Activated CD8-positive, alpha-beta T cell treated with anti-CD3 and anti-CD28 coated beads for 36 hours (primary cell): ENCODE measurements at regions of chr12 and their contacts with region 1.

Region 1: DNA sequence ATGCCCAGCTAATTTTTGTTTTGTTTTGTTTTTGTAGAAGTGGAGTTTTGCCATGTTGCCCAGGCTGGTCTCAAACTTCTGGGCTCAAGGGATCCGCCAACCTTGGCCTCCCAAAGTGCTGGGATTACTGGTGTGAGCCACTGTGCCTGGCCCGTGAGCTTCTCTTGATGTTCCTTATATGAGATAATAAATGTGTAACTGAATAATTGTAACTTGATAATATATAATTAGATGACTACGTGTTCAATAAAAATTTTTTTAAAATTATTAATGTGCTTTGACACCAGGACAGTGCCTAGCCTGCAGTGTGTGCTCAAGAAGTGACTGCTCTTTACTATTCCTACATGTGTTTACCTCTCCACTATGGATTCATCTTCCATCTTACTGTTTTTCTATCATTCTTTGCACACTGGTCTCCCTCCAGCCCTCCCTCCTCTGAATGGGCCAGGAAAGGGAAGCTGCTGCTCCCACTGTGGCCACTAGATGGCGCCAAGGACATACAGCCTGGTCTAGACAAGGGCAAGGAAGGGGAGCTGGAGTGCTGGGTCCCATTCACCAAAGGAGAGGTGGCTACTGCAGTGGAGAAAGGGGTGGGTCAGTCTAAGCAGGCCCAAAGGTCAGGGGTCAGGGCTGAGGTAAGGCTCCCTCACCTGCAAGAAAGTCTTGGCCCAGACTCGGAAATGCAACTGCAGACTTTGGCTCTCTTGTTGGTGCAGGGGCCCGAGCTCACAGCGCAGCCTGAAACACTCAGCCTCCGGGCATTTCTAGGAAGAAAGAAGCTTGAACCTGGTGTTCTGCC is 14.7 kb upstream of the ZNF385A start:
- DNase-seq: peak; percentile 93
- ATAC-seq: peak; percentile 97
- H3K4me3 Mint-ChIP-seq: no peak overlapping the region
- H3K27ac Mint-ChIP-seq: no peak overlapping the region
- H3K4me1 Mint-ChIP-seq: peaks cover 5% of the 10 kb centered on the region
- H3K27me3 Mint-ChIP-seq: no peaks in the 10 kb centered on the region
- CTCF ChIP-seq: peak; percentile 92

Region 2: GRCh38 chr12:54359033-54359761 is 40.0 kb before region 1 on chr12:
- CTCF ChIA-PET with region 1: interaction called, 14 read pairs
- POLR2A ChIA-PET with region 1: no interaction called
- intact Hi-C with region 1: no loop called
- DNase-seq: peak; percentile 97
- ATAC-seq: peak; percentile 93
- H3K4me3 Mint-ChIP-seq: no peak overlapping the region
- H3K27ac Mint-ChIP-seq: no peak overlapping the region
- H3K4me1 Mint-ChIP-seq: peaks cover 17% of the 10 kb centered on the region
- H3K27me3 Mint-ChIP-seq: no peaks in the 10 kb centered on the region
- CTCF ChIP-seq: no peak

Region 3: DNA sequence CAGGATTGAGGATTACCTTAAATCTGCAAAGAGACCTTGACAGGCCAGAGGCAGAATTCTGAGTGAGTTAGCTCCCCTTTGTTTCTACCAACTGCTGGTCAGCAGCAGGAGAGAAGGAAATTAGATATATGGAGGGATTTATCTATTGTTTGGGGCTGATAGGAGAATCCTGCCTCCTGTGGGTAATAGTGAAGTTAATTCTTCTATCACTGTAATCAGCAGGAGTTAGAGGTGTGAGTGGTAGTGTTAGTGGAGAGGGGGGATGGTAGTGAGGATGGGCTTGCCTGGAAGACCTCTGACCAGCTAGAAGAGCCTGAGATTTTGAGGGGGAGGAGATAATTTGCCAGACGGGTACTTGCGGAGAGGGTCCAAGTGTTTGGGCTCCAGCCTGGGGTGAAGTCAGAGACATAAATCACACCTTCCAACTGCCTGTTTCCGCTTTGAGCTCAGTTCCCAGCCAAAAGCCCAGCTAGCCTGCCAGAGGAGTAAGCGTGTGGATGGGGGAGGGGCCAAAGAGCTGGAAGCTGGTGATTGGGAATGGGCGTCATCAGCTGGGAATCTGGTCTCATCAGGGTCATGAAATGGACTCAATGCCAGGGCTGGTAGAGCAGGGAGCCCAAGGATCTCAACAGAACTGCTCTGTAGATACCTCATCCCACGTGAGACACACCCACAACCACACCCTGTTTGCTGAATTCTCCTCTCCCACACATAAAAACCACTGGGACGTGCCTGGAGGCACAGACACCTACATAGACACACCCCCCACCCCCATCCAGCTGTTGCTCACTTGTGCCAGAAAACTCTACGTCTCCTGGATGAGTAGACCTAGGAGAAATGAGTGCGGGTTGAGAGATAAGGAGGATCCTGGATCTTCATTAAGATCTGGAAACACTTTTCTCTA is 33.0 kb after region 1 on chr12:
- CTCF ChIA-PET with region 1: interaction called, 479 read pairs
- POLR2A ChIA-PET with region 1: interaction called, 10 read pairs
- intact Hi-C with region 1: no loop called
- DNase-seq: peak; percentile 80
- ATAC-seq: peak; percentile 72
- H3K4me3 Mint-ChIP-seq: peak overlapping the region; percentile 37
- H3K27ac Mint-ChIP-seq: peak overlapping the region; percentile 60
- H3K4me1 Mint-ChIP-seq: peaks cover 29% of the 10 kb centered on the region
- H3K27me3 Mint-ChIP-seq: no peaks in the 10 kb centered on the region
- CTCF ChIP-seq: no peak

Region 4: GRCh38 chr12:54455760-54456469 is 56.7 kb after region 1 on chr12:
- CTCF ChIA-PET with region 1: interaction called, 26 read pairs
- POLR2A ChIA-PET with region 1: interaction called, 4 read pairs
- intact Hi-C with region 1: no loop called
- DNase-seq: no peak
- ATAC-seq: no peak
- H3K4me3 Mint-ChIP-seq: no peak overlapping the region
- H3K27ac Mint-ChIP-seq: no peak overlapping the region
- H3K4me1 Mint-ChIP-seq: no peaks in the 10 kb centered on the region
- H3K27me3 Mint-ChIP-seq: peaks cover 5% of the 10 kb centered on the region
- CTCF ChIP-seq: no peak

Region 5: GRCh38 chr12:54497883-54498282 is 98.7 kb after region 1 on chr12:
- CTCF ChIA-PET with region 1: interaction called, 33 read pairs
- POLR2A ChIA-PET with region 1: interaction called, 7 read pairs
- intact Hi-C with region 1: no loop called
- DNase-seq: no peak
- ATAC-seq: peak; percentile 4
- H3K4me3 Mint-ChIP-seq: peak overlapping the region; percentile 94
- H3K27ac Mint-ChIP-seq: peak overlapping the region; percentile 98
- H3K4me1 Mint-ChIP-seq: peaks cover 36% of the 10 kb centered on the region
- H3K27me3 Mint-ChIP-seq: no peaks in the 10 kb centered on the region
- CTCF ChIP-seq: no peak

Region 6: GRCh38 chr12:54701940-54702592 is 302.9 kb after region 1 on chr12:
- CTCF ChIA-PET with region 1: no interaction called
- POLR2A ChIA-PET with region 1: no interaction called
- intact Hi-C with region 1: no loop called
- DNase-seq: peak; percentile 24
- ATAC-seq: peak; percentile 47
- H3K4me3 Mint-ChIP-seq: no peak overlapping the region
- H3K27ac Mint-ChIP-seq: no peak overlapping the region
- H3K4me1 Mint-ChIP-seq: no peaks in the 10 kb centered on the region
- H3K27me3 Mint-ChIP-seq: peaks cover 4% of the 10 kb centered on the region
- CTCF ChIP-seq: peak; percentile 73